Activated CD4-positive, alpha-beta memory T cell treated with anti-CD3 and anti-CD28 coated beads for 36 hours (primary cell): ENCODE measurements at regions of chr1 and their contacts with region 1.

Region 1: DNA sequence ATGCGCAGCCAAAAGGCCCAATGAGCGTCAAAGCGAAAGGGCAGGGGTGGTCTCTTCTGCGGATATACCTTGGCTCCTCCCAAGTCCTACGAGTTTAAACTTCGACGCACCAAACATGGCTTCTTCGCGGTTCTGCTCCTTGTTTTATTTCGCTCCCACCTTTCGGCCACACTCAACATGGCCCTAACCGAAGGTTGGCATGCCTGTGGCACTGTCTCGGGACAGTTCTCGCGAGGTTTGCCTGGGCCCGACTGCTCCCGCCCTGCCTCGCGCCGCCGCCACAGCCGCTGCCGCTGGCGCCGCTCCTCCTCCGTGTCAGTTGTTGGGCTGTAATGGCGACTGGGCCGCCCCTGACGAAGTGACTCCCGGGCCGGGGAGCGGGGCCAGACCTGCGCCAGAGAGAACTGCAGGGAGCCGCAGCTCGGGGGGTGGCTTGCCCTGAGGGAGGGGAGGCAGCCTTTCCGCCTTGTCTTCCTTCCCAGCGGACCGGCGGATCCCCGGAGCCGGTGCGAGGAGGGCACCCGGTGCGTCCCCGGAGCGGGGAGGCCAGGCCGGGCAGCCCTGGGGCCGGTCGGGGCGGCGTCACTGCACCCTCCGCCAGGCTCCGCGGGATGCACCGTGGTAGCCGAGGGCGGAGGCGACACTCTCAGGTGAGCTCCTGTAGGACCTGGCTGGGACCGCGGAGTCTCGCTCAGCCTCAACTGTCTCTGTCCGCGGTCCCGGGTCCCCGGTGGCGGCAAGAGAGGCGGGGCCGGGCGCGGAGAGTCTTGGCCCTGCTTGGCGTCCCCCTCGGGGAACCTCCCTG is at the start of gene CEP350:
- DNase-seq: peak; percentile 99
- H3K4me3 Mint-ChIP-seq: peak within 1 kb of the TSS; percentile 80
- H3K27ac Mint-ChIP-seq: peak within 1 kb of the TSS; percentile 95
- H3K4me1 Mint-ChIP-seq: peaks cover 42% of the 10 kb centered on the region
- H3K27me3 Mint-ChIP-seq: no peaks in the 10 kb centered on the region
- total RNA-seq, gene CEP350: 31.7 to 34.2 TPM

Region 2: GRCh38 chr1:178844436-178844835 is 1110.3 kb before region 1 on chr1:
- CTCF ChIA-PET with region 1: no interaction called
- POLR2A ChIA-PET with region 1: no interaction called
- intact Hi-C with region 1: no loop called
- DNase-seq: no peak
- H3K4me3 Mint-ChIP-seq: no peak overlapping the region
- H3K27ac Mint-ChIP-seq: no peak overlapping the region
- H3K4me1 Mint-ChIP-seq: no peaks in the 10 kb centered on the region
- H3K27me3 Mint-ChIP-seq: no peaks in the 10 kb centered on the region

Region 3: GRCh38 chr1:179025125-179025974 is 929.3 kb before region 1 on chr1 and contains the start of gene FAM20B:
- CTCF ChIA-PET with region 1: no interaction called
- POLR2A ChIA-PET with region 1: no interaction called
- intact Hi-C with region 1: loop called (anchors 5 kb)
- DNase-seq: peak; percentile 94
- H3K4me3 Mint-ChIP-seq: peak within 1 kb of the TSS; percentile 87
- H3K27ac Mint-ChIP-seq: peak within 1 kb of the TSS; percentile 85
- H3K4me1 Mint-ChIP-seq: peaks cover 37% of the 10 kb centered on the region
- H3K27me3 Mint-ChIP-seq: no peaks in the 10 kb centered on the region
- total RNA-seq, gene FAM20B: 38.1 to 39.2 TPM

Region 4: DNA sequence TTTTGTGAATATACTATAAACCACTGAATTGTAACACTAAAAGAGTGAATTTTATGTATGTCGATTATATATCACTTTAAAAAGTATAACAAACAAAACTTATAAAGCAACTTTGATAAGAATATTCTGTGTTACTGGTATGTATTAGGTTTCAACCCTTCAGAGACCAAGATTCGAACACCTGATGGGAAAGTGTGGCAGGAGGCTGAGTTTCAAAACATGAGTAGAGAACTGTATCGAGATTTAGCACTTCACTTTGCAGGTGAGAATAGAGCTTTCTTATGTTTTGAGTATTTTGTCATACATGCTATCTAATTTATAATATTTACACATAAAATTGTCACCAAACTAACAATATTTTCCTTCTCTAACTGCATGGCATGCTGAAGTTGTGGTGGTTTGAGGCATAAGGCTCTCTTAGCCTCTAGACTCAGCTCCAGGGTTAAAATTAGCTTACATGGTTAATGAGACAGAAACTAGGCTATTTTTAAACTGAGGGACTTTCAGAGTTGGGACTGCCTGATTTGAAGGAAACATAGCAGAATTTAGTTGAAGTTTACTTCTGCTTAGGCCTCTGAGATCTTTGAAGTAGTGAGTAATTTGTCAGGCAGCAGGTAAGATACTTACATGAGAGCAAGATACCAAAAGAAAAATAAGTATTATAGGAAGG is 48.5 kb after region 1 on chr1:
- CTCF ChIA-PET with region 1: no interaction called
- POLR2A ChIA-PET with region 1: no interaction called
- intact Hi-C with region 1: no loop called
- DNase-seq: no peak
- H3K4me3 Mint-ChIP-seq: no peak overlapping the region
- H3K27ac Mint-ChIP-seq: no peak overlapping the region
- H3K4me1 Mint-ChIP-seq: peaks cover 5% of the 10 kb centered on the region
- H3K27me3 Mint-ChIP-seq: no peaks in the 10 kb centered on the region

Region 5: DNA sequence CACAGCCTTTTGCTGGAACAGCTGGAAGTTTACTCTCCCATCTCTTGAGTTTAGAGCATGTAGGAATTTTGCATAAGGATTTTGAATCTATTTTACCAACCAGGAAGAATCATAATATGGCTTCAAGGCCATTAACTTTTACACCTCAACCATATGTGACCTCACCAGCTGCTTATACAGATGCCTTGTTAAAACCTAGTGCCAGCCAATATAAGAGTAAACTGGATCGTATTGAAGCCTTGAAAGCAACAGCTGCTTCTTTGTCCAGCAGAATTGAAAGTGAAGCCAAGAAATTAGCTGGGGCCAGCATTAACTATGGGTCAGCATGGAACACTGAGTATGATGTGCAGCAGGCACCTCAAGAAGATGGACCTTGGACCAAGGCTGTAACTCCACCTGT is 65.3 kb after region 1 on chr1:
- CTCF ChIA-PET with region 1: no interaction called
- POLR2A ChIA-PET with region 1: no interaction called
- intact Hi-C with region 1: no loop called
- DNase-seq: no peak
- H3K4me3 Mint-ChIP-seq: no peak overlapping the region
- H3K27ac Mint-ChIP-seq: no peak overlapping the region
- H3K4me1 Mint-ChIP-seq: no peaks in the 10 kb centered on the region
- H3K27me3 Mint-ChIP-seq: no peaks in the 10 kb centered on the region

Region 6: DNA sequence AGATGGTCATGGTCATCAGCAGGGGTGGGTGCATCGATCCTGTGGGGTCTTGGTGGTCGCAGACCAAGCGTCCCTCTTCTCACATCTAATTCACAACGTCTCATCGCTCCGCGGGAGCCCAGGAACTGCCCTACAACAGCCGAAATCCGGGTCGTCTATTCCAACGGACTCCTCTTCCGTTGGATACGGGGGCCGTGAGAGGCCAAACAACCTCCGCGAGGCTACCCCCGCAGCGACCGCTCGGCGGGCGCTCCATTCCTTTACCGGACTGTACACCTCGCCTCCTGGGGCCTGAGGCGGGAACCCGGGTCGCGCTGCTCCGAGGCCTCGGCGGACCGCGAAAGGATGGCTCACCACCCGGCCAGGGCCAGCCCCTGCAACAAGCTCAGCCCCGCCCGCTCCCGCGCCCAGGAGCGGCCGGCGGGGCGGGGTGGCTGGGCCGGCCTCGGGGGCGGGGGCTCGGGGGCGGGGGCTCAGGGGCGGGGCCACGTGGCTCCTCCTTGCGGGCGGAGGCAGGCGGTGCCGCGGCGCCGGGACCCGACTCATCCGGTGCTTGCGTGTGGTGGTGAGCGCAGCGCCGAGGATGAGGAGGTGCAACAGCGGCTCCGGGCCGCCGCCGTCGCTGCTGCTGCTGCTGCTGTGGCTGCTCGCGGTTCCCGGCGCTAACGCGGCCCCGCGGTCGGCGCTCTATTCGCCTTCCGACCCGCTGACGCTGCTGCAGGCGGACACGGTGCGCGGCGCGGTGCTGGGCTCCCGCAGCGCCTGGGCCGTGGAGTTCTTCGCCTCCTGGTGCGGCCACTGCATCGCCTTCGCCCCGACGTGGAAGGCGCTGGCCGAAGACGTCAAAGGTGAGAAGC is 199.9 kb after region 1 on chr1 and contains the start of gene QSOX1:
- CTCF ChIA-PET with region 1: no interaction called
- POLR2A ChIA-PET with region 1: no interaction called
- intact Hi-C with region 1: loop called (anchors 1 kb)
- DNase-seq: peak; percentile 93
- H3K4me3 Mint-ChIP-seq: peak within 1 kb of the TSS; percentile 89
- H3K27ac Mint-ChIP-seq: peak within 1 kb of the TSS; percentile 73
- H3K4me1 Mint-ChIP-seq: peaks cover 26% of the 10 kb centered on the region
- H3K27me3 Mint-ChIP-seq: no peaks in the 10 kb centered on the region
- total RNA-seq, gene QSOX1: 40.3 to 42.4 TPM

Region 7: DNA sequence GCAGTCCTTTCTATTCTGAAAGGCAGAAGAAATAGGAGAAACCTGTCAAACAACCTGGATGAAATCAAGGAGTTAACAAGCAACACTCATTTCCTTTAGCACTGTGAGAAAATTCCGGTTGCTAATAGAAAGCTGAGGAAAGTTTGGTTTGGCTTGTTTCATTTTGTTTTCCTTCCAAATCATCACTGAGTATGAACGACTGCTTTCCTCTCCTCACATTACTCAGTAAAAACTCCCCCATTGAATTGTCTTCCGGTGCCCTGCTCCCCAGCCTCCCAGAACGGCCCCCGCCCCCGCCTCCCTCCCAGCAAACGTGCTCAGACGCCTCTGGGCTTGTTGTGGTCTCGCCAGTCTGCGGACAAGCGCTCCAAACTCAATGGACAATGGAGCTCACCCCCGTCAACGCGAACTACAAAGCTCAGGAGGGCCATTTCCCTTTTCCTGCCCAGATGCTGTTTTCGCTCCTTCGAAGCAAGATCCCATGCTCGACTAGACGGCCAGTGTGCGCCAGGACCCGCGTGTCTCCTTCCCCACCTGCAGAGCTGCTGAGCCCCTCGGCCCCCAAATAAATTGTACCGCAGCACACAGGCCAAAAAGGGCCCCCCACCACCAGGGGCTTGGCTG is 1067.2 kb after region 1 on chr1:
- CTCF ChIA-PET with region 1: no interaction called
- POLR2A ChIA-PET with region 1: no interaction called
- intact Hi-C with region 1: loop called (anchors 5 kb)
- DNase-seq: peak; percentile 84
- H3K4me3 Mint-ChIP-seq: peak overlapping the region; percentile 94
- H3K27ac Mint-ChIP-seq: peak overlapping the region; percentile 97
- H3K4me1 Mint-ChIP-seq: peaks cover 37% of the 10 kb centered on the region
- H3K27me3 Mint-ChIP-seq: no peaks in the 10 kb centered on the region